ENCODE measurements at regions of chr5 and their contacts with region 1.

Region 1: GRCh38 chr5:131488463-131488862 is 146.6 kb downstream of the RAPGEF6 start:
- DNase-seq: no peak
- H3K4me3 Mint-ChIP-seq: no peak overlapping the region
- H3K27ac Mint-ChIP-seq: peak overlapping the region; percentile 65
- H3K4me1 Mint-ChIP-seq: peaks cover 49% of the 10 kb centered on the region
- H3K27me3 Mint-ChIP-seq: no peaks in the 10 kb centered on the region

Region 2: GRCh38 chr5:131466171-131466766 is 22.2 kb before region 1 on chr5:
- CTCF ChIA-PET with region 1: interaction called, 4 read pairs
- intact Hi-C with region 1: loop called (anchors 2 kb)
- DNase-seq: peak; percentile 27
- H3K4me3 Mint-ChIP-seq: no peak overlapping the region
- H3K27ac Mint-ChIP-seq: peak overlapping the region; percentile 68
- H3K4me1 Mint-ChIP-seq: peaks cover 48% of the 10 kb centered on the region
- H3K27me3 Mint-ChIP-seq: no peaks in the 10 kb centered on the region

Region 3: GRCh38 chr5:131514316-131515283 is 26.1 kb after region 1 on chr5:
- CTCF ChIA-PET with region 1: interaction called, 3 read pairs
- intact Hi-C with region 1: loop called (anchors 1 kb)
- DNase-seq: peak; percentile 32
- H3K4me3 Mint-ChIP-seq: peak overlapping the region; percentile 58
- H3K27ac Mint-ChIP-seq: peak overlapping the region; percentile 51
- H3K4me1 Mint-ChIP-seq: peaks cover 57% of the 10 kb centered on the region
- H3K27me3 Mint-ChIP-seq: no peaks in the 10 kb centered on the region

Region 4: GRCh38 chr5:131541762-131542161 is 53.3 kb after region 1 on chr5:
- CTCF ChIA-PET with region 1: interaction called, 3 read pairs
- intact Hi-C with region 1: loop called (anchors 2 kb)
- DNase-seq: no peak
- H3K4me3 Mint-ChIP-seq: peak overlapping the region; percentile 20
- H3K27ac Mint-ChIP-seq: peak overlapping the region; percentile 78
- H3K4me1 Mint-ChIP-seq: peaks cover 81% of the 10 kb centered on the region
- H3K27me3 Mint-ChIP-seq: no peaks in the 10 kb centered on the region

Region 5: GRCh38 chr5:131854134-131854533 is 365.7 kb after region 1 on chr5:
- CTCF ChIA-PET with region 1: no interaction called
- intact Hi-C with region 1: loop called (anchors 1 kb)
- DNase-seq: peak; percentile 37
- H3K4me3 Mint-ChIP-seq: no peak overlapping the region
- H3K27ac Mint-ChIP-seq: no peak overlapping the region
- H3K4me1 Mint-ChIP-seq: peaks cover 10% of the 10 kb centered on the region
- H3K27me3 Mint-ChIP-seq: no peaks in the 10 kb centered on the region

Region 6: DNA sequence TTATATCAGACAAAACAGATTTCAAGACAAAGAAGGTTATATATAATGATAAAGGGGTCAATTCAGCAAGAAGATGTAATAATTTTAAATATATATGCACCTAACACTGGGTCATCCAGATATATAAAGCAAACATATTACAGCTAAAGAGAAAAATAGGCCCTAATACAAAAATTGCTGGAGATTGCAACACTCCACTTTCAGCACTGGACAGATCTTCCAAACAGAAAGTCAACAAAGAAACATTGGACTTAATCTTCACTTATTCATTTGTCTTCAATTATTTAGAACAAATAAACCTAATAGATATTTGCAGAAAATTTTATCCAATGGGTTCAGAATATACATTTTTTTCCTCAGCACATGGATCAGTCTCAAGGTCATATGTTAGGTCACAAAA is 411.2 kb after region 1 on chr5:
- CTCF ChIA-PET with region 1: no interaction called
- intact Hi-C with region 1: loop called (anchors 10 kb)
- DNase-seq: no peak
- H3K4me3 Mint-ChIP-seq: no peak overlapping the region
- H3K27ac Mint-ChIP-seq: no peak overlapping the region
- H3K4me1 Mint-ChIP-seq: peaks cover 22% of the 10 kb centered on the region
- H3K27me3 Mint-ChIP-seq: no peaks in the 10 kb centered on the region

Region 7: DNA sequence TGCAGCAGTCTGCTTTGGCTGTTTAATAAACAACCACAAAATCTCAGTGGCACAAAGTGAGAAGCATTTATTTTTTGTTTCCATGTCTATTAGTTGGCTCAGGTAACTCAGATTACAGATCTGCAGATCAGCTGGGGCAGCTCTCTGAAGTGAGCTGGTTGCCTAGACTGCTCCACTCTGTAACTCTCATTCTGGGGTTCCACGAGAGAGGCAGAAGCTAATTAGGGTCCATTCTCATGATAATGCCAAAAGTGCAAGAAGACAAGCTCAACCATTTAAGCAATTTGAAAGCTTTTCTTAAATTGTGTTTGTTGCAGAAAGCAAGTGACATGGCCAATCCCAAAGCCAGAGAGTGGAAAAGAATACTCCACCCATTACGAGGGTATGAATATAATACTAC is 443.8 kb after region 1 on chr5:
- CTCF ChIA-PET with region 1: no interaction called
- intact Hi-C with region 1: no loop called
- DNase-seq: no peak
- H3K4me3 Mint-ChIP-seq: no peak overlapping the region
- H3K27ac Mint-ChIP-seq: no peak overlapping the region
- H3K4me1 Mint-ChIP-seq: peaks cover 4% of the 10 kb centered on the region
- H3K27me3 Mint-ChIP-seq: no peaks in the 10 kb centered on the region

Region 8: GRCh38 chr5:132094393-132095076 is 606.1 kb after region 1 on chr5:
- CTCF ChIA-PET with region 1: no interaction called
- intact Hi-C with region 1: loop called (anchors 5 kb)
- DNase-seq: peak; percentile 37
- H3K4me3 Mint-ChIP-seq: no peak overlapping the region
- H3K27ac Mint-ChIP-seq: no peak overlapping the region
- H3K4me1 Mint-ChIP-seq: peaks cover 33% of the 10 kb centered on the region
- H3K27me3 Mint-ChIP-seq: peaks cover 4% of the 10 kb centered on the region